ENCODE measurements at regions of chr10 and their contacts with region 1.

Region 1: GRCh38 chr10:28381903-28382347 is 79.1 kb upstream of the MPP7 start:
- DNase-seq: peak; percentile 92
- ATAC-seq: peak; percentile 95
- H3K4me3 ChIP-seq: no peak overlapping the region
- H3K27ac ChIP-seq: no peak overlapping the region; the same call in 1 of the 2 replicates
- H3K4me1 ChIP-seq: peaks cover 19 to 23% of the 10 kb centered on the region in 2 experiments
- H3K27me3 ChIP-seq: no peaks in the 10 kb centered on the region
- CTCF ChIP-seq: peak; percentile 89 to 99 (median 98)
- POLR2A ChIP-seq: no peak
- RAD21 ChIP-seq: peak; percentile 100

Region 2: GRCh38 chr10:27446091-27446918 is 935.6 kb before region 1 on chr10:
- CTCF ChIA-PET with region 1: no interaction called
- POLR2A ChIA-PET with region 1: no interaction called
- RAD21 ChIA-PET with region 1: no interaction called
- intact Hi-C with region 1: loop called (anchors 1 kb)
- DNase-seq: peak; percentile 23
- ATAC-seq: peak; percentile 70
- H3K4me3 ChIP-seq: peak overlapping the region; percentile 2 to 31; a peak in 2 of 4 replicates
- H3K27ac ChIP-seq: no peak overlapping the region
- H3K4me1 ChIP-seq: peaks cover 9 to 10% of the 10 kb centered on the region in 2 experiments; a peak in 3 of 4 replicates
- H3K27me3 ChIP-seq: no peaks in the 10 kb centered on the region
- CTCF ChIP-seq: peak; percentile 37 to 60 (median 53); a peak in 4 of 6 replicates
- POLR2A ChIP-seq: no peak
- RAD21 ChIP-seq: peak; percentile 73

Region 3: GRCh38 chr10:27742195-27743011 is 639.5 kb before region 1 on chr10:
- CTCF ChIA-PET with region 1: no interaction called
- POLR2A ChIA-PET with region 1: no interaction called
- RAD21 ChIA-PET with region 1: no interaction called
- intact Hi-C with region 1: loop called (anchors 5 kb)
- DNase-seq: peak; percentile 67
- ATAC-seq: peak; percentile 78
- H3K4me3 ChIP-seq: peak overlapping the region; percentile 46 to 57
- H3K27ac ChIP-seq: peak overlapping the region; percentile 97
- H3K4me1 ChIP-seq: peaks cover 13 to 17% of the 10 kb centered on the region in 2 experiments; a peak in 3 of 4 replicates
- H3K27me3 ChIP-seq: no peaks in the 10 kb centered on the region
- CTCF ChIP-seq: peak; percentile 31 to 63 (median 59); a peak in 5 of 6 replicates
- POLR2A ChIP-seq: no peak
- RAD21 ChIP-seq: peak; percentile 68

Region 4: DNA sequence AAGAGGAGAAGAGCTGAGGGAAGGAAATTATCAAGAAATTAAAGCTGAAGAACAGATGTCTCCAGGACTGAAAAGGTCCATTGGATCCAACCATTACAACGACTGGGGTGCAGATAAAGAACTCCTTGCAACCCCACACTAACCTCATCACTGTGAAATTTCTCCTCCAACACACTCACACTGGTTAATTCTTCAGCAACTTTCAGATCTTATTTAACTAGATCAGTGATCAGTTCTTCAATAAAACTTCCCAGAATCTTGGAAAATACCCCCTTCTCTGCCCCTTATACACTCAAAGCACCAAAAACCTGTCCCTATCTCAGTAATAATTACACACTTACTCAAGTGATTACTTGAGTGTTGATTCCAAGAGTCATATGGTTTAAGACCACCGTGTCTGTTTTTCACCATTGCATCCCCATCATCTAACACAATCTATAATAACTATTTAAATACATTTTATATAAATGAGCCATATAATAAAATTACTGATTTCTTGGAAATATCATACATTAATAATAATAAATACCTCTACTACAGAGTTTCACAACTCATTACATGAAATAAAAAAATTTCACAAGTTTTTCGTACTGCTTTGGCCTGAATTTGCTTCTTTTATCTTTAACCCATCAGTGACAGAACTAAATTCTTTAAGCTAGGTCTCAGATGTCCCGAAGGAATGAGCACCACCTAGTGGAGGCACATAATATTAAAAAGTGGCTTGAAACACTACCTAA is 202.8 kb before region 1 on chr10:
- CTCF ChIA-PET with region 1: interaction called, 3 read pairs
- POLR2A ChIA-PET with region 1: no interaction called
- RAD21 ChIA-PET with region 1: no interaction called
- intact Hi-C with region 1: loop called (anchors 5 kb)
- DNase-seq: peak; percentile 69
- ATAC-seq: peak; percentile 57
- H3K4me3 ChIP-seq: peak overlapping the region; percentile 31 to 42; a peak in 3 of 4 replicates
- H3K27ac ChIP-seq: peak overlapping the region; percentile 94
- H3K4me1 ChIP-seq: peaks cover 79% of the 10 kb centered on the region in 2 experiments
- H3K27me3 ChIP-seq: no peaks in the 10 kb centered on the region
- CTCF ChIP-seq: peak; percentile 45 to 77 (median 75)
- POLR2A ChIP-seq: no peak
- RAD21 ChIP-seq: peak; percentile 95

Region 5: GRCh38 chr10:28291881-28292297 is 90.0 kb before region 1 on chr10:
- CTCF ChIA-PET with region 1: no interaction called
- POLR2A ChIA-PET with region 1: no interaction called
- RAD21 ChIA-PET with region 1: no interaction called
- intact Hi-C with region 1: loop called (anchors 2 kb)
- DNase-seq: peak; percentile 71
- ATAC-seq: peak; percentile 99
- H3K4me3 ChIP-seq: peak overlapping the region in 1 of 2 experiments; percentile 40; a peak in 2 of 4 replicates
- H3K27ac ChIP-seq: peak overlapping the region; percentile 57; the same call in 1 of the 2 replicates
- H3K4me1 ChIP-seq: peaks cover 46 to 48% of the 10 kb centered on the region in 2 experiments
- H3K27me3 ChIP-seq: no peaks in the 10 kb centered on the region
- CTCF ChIP-seq: no peak
- POLR2A ChIP-seq: no peak
- RAD21 ChIP-seq: no peak

Region 6: DNA sequence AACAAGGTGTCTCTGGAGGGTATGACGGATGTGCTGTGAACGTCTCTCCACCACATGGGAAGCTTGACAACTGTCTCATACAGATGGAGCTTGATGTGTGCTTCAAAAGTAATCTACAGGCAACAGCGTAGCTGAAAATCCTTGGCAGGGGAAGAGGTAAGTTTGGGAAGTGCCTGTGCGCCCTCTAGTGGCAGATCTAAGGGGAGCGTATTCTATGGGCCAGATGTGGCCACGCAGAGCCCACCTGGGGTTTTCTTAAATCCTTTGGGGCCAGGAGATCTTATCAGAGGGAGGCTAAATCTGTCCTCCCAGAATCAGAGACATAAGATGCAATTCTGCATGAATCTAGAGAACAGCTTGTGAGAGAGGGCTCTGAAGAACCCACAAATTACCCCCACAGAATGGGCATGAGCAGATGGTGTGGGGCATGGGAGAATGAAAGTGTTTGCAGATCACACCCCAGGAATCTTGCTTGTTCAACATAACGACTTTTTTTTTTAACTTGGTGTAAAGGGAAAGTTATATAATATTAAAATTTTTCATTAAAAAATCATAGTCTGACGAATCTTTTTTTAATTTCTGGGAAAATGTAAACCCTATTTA is 12.1 kb after region 1 on chr10:
- CTCF ChIA-PET with region 1: interaction called, 25 read pairs
- POLR2A ChIA-PET with region 1: no interaction called
- RAD21 ChIA-PET with region 1: no interaction called
- intact Hi-C with region 1: no loop called
- DNase-seq: peak; percentile 69
- ATAC-seq: peak; percentile 94
- H3K4me3 ChIP-seq: peak overlapping the region in 1 of 2 experiments; percentile 33; a peak in 1 of 4 replicates
- H3K27ac ChIP-seq: peak overlapping the region; percentile 30
- H3K4me1 ChIP-seq: peaks cover 16 to 24% of the 10 kb centered on the region in 2 experiments; a peak in 3 of 4 replicates
- H3K27me3 ChIP-seq: no peaks in the 10 kb centered on the region
- CTCF ChIP-seq: peak; percentile 67 to 95 (median 94)
- POLR2A ChIP-seq: no peak
- RAD21 ChIP-seq: peak; percentile 89

Region 7: DNA sequence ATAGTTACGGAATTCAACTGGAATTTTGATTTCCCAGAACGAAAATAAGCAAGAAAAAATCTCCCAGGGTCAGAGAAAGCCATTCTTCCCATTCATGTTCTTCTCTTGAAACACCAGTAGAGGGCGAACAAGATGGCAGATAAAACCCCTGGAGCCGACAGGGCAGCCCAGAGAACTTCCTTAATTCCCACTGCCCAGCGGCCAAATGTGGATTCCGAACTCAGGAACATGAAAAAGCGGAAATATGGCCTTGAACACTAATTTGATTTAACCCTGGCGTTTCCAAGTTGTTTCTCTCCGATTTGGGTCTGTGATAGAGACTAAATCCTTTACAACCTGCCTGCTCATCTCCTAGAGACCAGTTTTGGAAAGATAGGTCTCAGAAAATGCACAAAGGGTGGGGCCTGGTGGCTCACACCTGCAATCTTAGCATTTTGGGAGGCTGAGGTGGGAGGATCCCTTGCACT is 50.3 kb after region 1 on chr10:
- CTCF ChIA-PET with region 1: no interaction called
- POLR2A ChIA-PET with region 1: no interaction called
- RAD21 ChIA-PET with region 1: no interaction called
- intact Hi-C with region 1: no loop called
- DNase-seq: peak; percentile 70
- ATAC-seq: peak; percentile 93
- H3K4me3 ChIP-seq: peak overlapping the region in 1 of 2 experiments; percentile 34; a peak in 2 of 4 replicates
- H3K27ac ChIP-seq: no peak overlapping the region
- H3K4me1 ChIP-seq: peaks cover 0 to 7% of the 10 kb centered on the region in 2 experiments; a peak in 2 of 4 replicates
- H3K27me3 ChIP-seq: no peaks in the 10 kb centered on the region
- CTCF ChIP-seq: peak; percentile 67 to 83 (median 81)
- POLR2A ChIP-seq: no peak
- RAD21 ChIP-seq: peak; percentile 80

Region 8: GRCh38 chr10:28479425-28479865 is 97.5 kb after region 1 on chr10:
- CTCF ChIA-PET with region 1: no interaction called
- POLR2A ChIA-PET with region 1: no interaction called
- RAD21 ChIA-PET with region 1: no interaction called
- intact Hi-C with region 1: no loop called
- DNase-seq: no peak
- ATAC-seq: no peak
- H3K4me3 ChIP-seq: no peak overlapping the region
- H3K27ac ChIP-seq: no peak overlapping the region
- H3K4me1 ChIP-seq: no peaks in the 10 kb centered on the region
- H3K27me3 ChIP-seq: no peaks in the 10 kb centered on the region
- CTCF ChIP-seq: no peak
- POLR2A ChIP-seq: no peak
- RAD21 ChIP-seq: no peak